Activated T-helper 1 cell treated with anti-CD3 and anti-CD28 coated beads, Interleukin-12 subunit alpha, Interleukin-12 subunit beta, Interleukin-2, Interleukin-4 antibody, amounts not matched to agents 30 ng/mL and 10 ng/mL and 1 ng/mL, durations not matched to agents 14 hours and 24 hours and 36 hours (primary cell): ENCODE measurements at regions of chr7 and their contacts with region 1.

Region 1: GRCh38 chr7:33776788-33777481 is 128.4 kb upstream of the BMPER start:
- DNase-seq: no peak
- H3K4me3 Mint-ChIP-seq: no peak overlapping the region
- H3K27ac Mint-ChIP-seq: no peak overlapping the region
- H3K4me1 Mint-ChIP-seq: peaks cover 6% of the 10 kb centered on the region
- H3K27me3 Mint-ChIP-seq: peaks cover 2% of the 10 kb centered on the region

Region 2: GRCh38 chr7:33369888-33370287 is 407.0 kb before region 1 on chr7:
- intact Hi-C with region 1: no loop called
- DNase-seq: no peak
- H3K4me3 Mint-ChIP-seq: no peak overlapping the region
- H3K27ac Mint-ChIP-seq: no peak overlapping the region
- H3K4me1 Mint-ChIP-seq: no peaks in the 10 kb centered on the region
- H3K27me3 Mint-ChIP-seq: no peaks in the 10 kb centered on the region

Region 3: DNA sequence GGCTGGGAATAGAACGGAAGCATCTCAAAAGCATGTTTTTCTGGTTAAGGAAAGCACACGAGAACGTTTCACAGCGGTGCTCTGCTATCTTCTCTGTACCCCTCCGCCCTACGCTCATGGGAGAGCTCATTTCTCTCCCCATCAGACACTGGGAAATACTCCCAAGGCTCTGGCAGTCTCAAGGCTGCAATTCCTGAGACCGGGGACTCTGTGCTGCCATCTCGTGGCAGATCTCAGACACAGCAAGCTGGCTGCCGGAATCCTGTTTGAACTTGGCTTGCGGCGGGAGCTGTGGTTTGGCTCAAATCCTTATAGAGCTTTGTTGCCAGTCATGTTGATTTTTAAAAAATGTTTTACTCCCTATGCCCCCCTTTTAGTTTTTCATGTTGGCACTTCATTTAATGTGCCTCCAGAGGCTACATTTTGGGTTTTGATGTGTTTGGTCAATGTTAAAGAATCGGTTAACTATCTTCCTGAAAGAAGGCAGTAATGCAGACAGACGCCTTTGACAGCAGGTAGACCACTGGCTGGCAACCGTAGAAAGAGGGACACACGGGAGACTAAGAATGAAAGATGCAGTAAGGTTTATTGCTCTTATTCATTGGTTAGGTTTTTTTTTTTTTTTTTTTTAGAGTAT is 156.0 kb after region 1 on chr7:
- intact Hi-C with region 1: loop called (anchors 1 kb)
- DNase-seq: peak; percentile 36
- H3K4me3 Mint-ChIP-seq: no peak overlapping the region
- H3K27ac Mint-ChIP-seq: no peak overlapping the region
- H3K4me1 Mint-ChIP-seq: no peaks in the 10 kb centered on the region
- H3K27me3 Mint-ChIP-seq: peaks cover 6% of the 10 kb centered on the region